KBM-7 (cell line): ENCODE measurements at regions of chr10 and their contacts with region 1.

Region 1: GRCh38 chr10:115118346-115118745 is 25.2 kb downstream of the ATRNL1 start:
- DNase-seq: no peak

Region 2: DNA sequence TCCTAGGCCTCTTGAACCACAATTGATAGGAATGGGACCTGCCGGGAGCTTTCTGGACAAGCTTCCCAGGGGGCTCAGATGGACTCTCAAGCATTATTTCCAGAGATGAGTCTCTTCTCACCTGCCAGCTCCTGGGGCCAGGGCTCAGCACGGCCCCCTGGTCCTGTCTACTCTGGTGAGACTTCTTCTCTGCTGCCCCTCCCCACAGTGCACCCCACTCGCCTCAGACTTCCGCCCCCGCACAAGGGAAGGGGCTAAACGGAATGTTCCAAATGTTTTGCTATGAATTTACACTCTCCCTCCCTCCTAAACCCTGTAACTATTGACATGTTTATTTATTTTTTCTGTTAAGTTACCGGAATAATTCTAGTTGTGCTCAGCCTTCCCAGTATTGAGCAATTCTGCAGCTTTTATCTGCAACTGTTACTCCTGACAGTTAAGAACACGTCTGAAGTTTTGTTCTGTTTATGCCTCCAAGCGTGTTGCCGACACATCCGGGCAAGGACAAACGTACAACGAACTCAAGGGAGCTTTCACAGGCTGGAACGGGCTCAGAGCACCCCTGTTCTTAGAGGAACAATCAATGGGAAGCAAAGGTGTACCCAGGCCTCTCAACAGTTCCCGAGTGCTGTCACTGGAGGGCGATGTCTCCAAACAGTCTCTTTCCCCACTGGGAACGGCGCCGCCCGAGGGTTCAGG is 241.6 kb before region 1 on chr10:
- in situ Hi-C with region 1: loop called (anchors 25 kb)
- DNase-seq: peak; percentile 74